ENCODE measurements at regions of chr2 and their contacts with region 1.

Region 1: GRCh38 chr2:148965623-148966437 is 72.7 kb upstream of the LYPD6B start:
- DNase-seq: no peak
- ATAC-seq: no peak
- H3K4me3 ChIP-seq: no peak overlapping the region
- H3K27ac ChIP-seq: no peak overlapping the region
- H3K4me1 ChIP-seq: no peaks in the 10 kb centered on the region
- H3K27me3 ChIP-seq: peaks cover 16% of the 10 kb centered on the region
- CTCF ChIP-seq: no peak

Region 2: GRCh38 chr2:148565272-148565894 is 400.4 kb before region 1 on chr2:
- CTCF ChIA-PET with region 1: no interaction called
- POLR2A ChIA-PET with region 1: no interaction called
- intact Hi-C with region 1: loop called (anchors 5 kb)
- DNase-seq: peak; percentile 49
- ATAC-seq: peak; percentile 74
- H3K4me3 ChIP-seq: no peak overlapping the region
- H3K27ac ChIP-seq: no peak overlapping the region
- H3K4me1 ChIP-seq: no peaks in the 10 kb centered on the region
- H3K27me3 ChIP-seq: peaks cover 23% of the 10 kb centered on the region
- CTCF ChIP-seq: peak; percentile 48; the same call in 1 of the 2 replicates

Region 3: GRCh38 chr2:149281441-149281840 is 315.6 kb after region 1 on chr2:
- CTCF ChIA-PET with region 1: no interaction called
- POLR2A ChIA-PET with region 1: no interaction called
- intact Hi-C with region 1: no loop called
- DNase-seq: no peak
- ATAC-seq: no peak
- H3K4me3 ChIP-seq: no peak overlapping the region
- H3K27ac ChIP-seq: no peak overlapping the region
- H3K4me1 ChIP-seq: no peaks in the 10 kb centered on the region
- H3K27me3 ChIP-seq: peaks cover 40% of the 10 kb centered on the region
- CTCF ChIP-seq: no peak